OCI-LY7 (cell line): ENCODE measurements at regions of chr9 and their contacts with region 1.

Region 1: GRCh38 chr9:68919661-68920060 is 94.3 kb downstream of the PRKACG start:
- DNase-seq: peak; percentile 66
- H3K4me3 ChIP-seq: no peak overlapping the region
- H3K27ac ChIP-seq: peak overlapping the region; percentile 44
- H3K4me1 ChIP-seq: peaks cover 16% of the 10 kb centered on the region
- CTCF ChIP-seq: no peak

Region 2: GRCh38 chr9:68869022-68869421 is 50.6 kb before region 1 on chr9:
- CTCF ChIA-PET with region 1: no interaction called
- POLR2A ChIA-PET with region 1: interaction called, 3 read pairs
- intact Hi-C with region 1: loop called (anchors 10 kb)
- DNase-seq: no peak
- H3K4me3 ChIP-seq: no peak overlapping the region
- H3K27ac ChIP-seq: no peak overlapping the region
- H3K4me1 ChIP-seq: no peaks in the 10 kb centered on the region
- CTCF ChIP-seq: no peak

Region 3: GRCh38 chr9:68895741-68896478 is 23.8 kb before region 1 on chr9:
- CTCF ChIA-PET with region 1: no interaction called
- POLR2A ChIA-PET with region 1: interaction called, 5 read pairs
- intact Hi-C with region 1: loop called (anchors 2 kb)
- DNase-seq: peak; percentile 77
- H3K4me3 ChIP-seq: peak overlapping the region; percentile 40
- H3K27ac ChIP-seq: peak overlapping the region; percentile 52
- H3K4me1 ChIP-seq: peaks cover 39% of the 10 kb centered on the region
- CTCF ChIP-seq: no peak

Region 4: DNA sequence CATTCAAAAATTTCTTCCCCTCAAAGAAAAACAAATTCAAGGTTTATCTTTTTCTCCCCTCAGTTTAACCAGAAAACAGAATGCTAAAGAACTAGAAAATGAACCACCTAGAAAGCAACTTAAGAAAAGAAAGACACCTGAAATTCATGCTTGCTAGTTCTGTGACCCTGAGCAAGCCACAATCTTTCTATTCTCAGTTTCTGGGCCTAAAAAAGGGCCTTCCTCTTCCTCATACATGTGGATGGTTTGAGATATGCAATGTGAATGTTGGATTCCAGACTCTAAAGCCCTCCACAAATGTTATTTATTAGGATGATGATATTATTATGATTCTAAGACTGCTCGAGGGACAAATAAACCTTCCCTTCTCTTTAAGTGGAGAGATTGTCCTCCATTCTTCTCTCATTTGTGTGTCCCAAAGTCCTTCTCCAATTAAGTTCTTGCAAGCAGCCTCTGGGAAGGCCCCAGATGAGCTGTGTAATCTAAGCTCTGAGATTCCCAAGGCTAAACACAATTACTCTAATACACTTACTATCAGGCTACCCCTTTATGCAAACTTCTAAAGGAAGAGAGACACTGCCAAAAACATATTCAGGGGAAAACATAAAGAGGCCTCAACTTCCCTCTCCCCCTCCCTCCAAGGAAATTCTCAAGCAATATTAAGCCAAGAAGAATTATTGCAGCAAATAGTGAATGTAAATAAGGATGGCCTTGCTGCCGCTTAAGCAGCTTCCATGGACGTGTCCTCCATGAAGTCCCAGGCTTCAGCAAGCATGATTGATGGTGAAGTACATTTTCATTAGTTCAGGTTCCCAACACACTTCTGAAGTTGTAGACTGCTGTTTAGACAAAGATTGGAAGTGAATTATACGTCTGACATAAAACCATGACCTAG is 14.0 kb after region 1 on chr9:
- CTCF ChIA-PET with region 1: no interaction called
- POLR2A ChIA-PET with region 1: interaction called, 3 read pairs
- intact Hi-C with region 1: loop called (anchors 2 kb)
- DNase-seq: peak; percentile 70
- H3K4me3 ChIP-seq: peak overlapping the region; percentile 17
- H3K27ac ChIP-seq: peak overlapping the region; percentile 47
- H3K4me1 ChIP-seq: peaks cover 29% of the 10 kb centered on the region
- CTCF ChIP-seq: no peak

Region 5: DNA sequence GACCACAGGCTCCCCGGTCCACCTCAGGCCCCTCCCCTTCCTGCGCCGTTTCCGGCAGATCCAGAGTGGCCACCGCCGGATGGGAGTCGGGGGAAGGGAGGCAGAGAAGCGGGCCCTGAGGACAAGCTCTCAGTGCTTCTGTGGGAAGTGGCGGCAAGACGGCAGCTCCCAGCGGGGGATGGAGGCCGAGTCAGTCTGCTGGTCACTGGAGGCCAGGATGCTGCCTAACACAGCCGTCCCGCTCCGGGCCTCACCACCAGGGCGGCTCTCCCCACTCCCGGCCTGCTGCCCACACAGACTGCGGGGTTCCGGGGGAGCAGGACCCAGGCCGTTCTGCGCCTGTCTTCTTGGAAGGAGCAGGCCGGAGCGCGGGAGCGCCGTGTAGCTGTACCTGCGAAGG is 147.3 kb after region 1 on chr9:
- CTCF ChIA-PET with region 1: no interaction called
- POLR2A ChIA-PET with region 1: no interaction called
- intact Hi-C with region 1: no loop called
- DNase-seq: no peak
- H3K4me3 ChIP-seq: no peak overlapping the region
- H3K27ac ChIP-seq: no peak overlapping the region
- H3K4me1 ChIP-seq: no peaks in the 10 kb centered on the region
- CTCF ChIP-seq: no peak

Region 6: GRCh38 chr9:69265891-69266290 is 346.2 kb after region 1 on chr9:
- CTCF ChIA-PET with region 1: no interaction called
- POLR2A ChIA-PET with region 1: no interaction called
- intact Hi-C with region 1: no loop called
- DNase-seq: no peak
- H3K4me3 ChIP-seq: no peak overlapping the region
- H3K27ac ChIP-seq: no peak overlapping the region
- H3K4me1 ChIP-seq: no peaks in the 10 kb centered on the region
- CTCF ChIP-seq: no peak